Uterus (tissue), 4 donors: ENCODE measurements at regions of chr4 and their contacts with region 1.

Region 1: GRCh38 chr4:174365018-174365587 is 81.4 kb downstream of the CEP44 start:
- DNase-seq: no peak
- H3K4me3 ChIP-seq: no peak overlapping the region
- H3K27ac ChIP-seq: no peak overlapping the region
- H3K4me1 ChIP-seq: no peaks in the 10 kb centered on the region
- H3K27me3 ChIP-seq: no peaks in the 10 kb centered on the region
- CTCF ChIP-seq: peak; percentile 31 to 46 (median 42)
- POLR2A ChIP-seq: no peak

Region 2: DNA sequence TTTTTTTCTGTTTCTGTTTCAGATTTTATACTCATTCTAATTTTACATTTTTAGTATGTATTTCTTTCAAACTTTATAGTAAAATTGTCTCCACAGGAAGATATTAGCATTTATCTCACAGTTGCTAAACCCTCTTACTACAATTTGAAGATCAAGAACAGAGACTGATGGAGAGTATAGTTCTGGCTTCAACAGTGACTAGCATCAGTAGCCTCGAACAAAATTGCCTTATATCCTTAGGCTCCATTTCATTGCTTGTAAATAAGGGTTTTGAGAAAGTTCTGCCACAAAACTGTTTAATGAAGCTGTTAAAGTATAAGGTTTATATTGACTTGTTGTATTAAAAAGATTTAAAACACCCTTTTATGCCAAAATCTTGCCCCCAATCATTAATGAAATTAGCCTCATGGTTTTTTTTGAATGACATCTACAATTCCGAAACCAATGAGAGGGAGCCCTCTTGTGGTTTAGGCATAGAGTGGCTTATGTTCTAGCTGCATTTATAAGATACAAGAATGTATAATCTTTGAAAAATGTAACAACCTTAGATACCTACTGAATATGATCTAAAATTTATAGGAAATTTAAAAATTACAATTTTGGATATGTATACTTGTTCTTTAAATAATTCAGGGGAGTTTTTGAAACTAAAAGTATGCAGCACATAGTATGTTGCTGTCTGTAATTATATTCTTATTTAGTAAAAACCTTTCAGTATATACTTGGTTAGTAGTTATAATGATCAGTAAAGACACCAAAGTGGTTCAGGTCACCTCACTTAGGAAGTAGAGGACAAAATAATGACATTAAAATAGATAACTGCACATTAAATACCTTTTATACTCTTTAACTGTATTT is 267.0 kb after region 1 on chr4:
- intact Hi-C with region 1: loop called (anchors 10 kb)
- DNase-seq: peak in 1 of 2 donors; percentile 16
- H3K4me3 ChIP-seq: no peak overlapping the region
- H3K27ac ChIP-seq: peak overlapping the region in 1 of 2 donors; percentile 27
- H3K4me1 ChIP-seq: peaks cover 0 to 6% of the 10 kb centered on the region in 2 donors
- H3K27me3 ChIP-seq: no peaks in the 10 kb centered on the region
- CTCF ChIP-seq: peak; percentile 54 to 83 (median 74)
- POLR2A ChIP-seq: no peak

Region 3: GRCh38 chr4:174669278-174669677 is 304.2 kb after region 1 on chr4:
- intact Hi-C with region 1: no loop called
- DNase-seq: no peak
- H3K4me3 ChIP-seq: no peak overlapping the region
- H3K27ac ChIP-seq: peak overlapping the region; percentile 28 to 38
- H3K4me1 ChIP-seq: no peaks in the 10 kb centered on the region
- H3K27me3 ChIP-seq: no peaks in the 10 kb centered on the region
- CTCF ChIP-seq: no peak
- POLR2A ChIP-seq: no peak